Activated CD8-positive, alpha-beta T cell treated with anti-CD3 and anti-CD28 coated beads for 36 hours (primary cell): ENCODE measurements at regions of chr1 and their contacts with region 1.

Region 1: GRCh38 chr1:160098852-160099561 is 588 bp upstream of the IGSF8 start:
- DNase-seq: peak; percentile 99
- ATAC-seq: peak; percentile 89
- H3K4me3 Mint-ChIP-seq: peak overlapping the region; percentile 69
- H3K27ac Mint-ChIP-seq: peak overlapping the region; percentile 89
- H3K4me1 Mint-ChIP-seq: peaks cover 70% of the 10 kb centered on the region
- H3K27me3 Mint-ChIP-seq: no peaks in the 10 kb centered on the region
- CTCF ChIP-seq: no peak

Region 2: GRCh38 chr1:160046494-160047110 is 52.4 kb before region 1 on chr1:
- CTCF ChIA-PET with region 1: interaction called, 15 read pairs
- POLR2A ChIA-PET with region 1: interaction called, 3 read pairs
- intact Hi-C with region 1: no loop called
- DNase-seq: peak; percentile 54
- ATAC-seq: peak; percentile 87
- H3K4me3 Mint-ChIP-seq: peak overlapping the region; percentile 70
- H3K27ac Mint-ChIP-seq: peak overlapping the region; percentile 81
- H3K4me1 Mint-ChIP-seq: peaks cover 12% of the 10 kb centered on the region
- H3K27me3 Mint-ChIP-seq: peaks cover 12% of the 10 kb centered on the region
- CTCF ChIP-seq: peak; percentile 91

Region 3: DNA sequence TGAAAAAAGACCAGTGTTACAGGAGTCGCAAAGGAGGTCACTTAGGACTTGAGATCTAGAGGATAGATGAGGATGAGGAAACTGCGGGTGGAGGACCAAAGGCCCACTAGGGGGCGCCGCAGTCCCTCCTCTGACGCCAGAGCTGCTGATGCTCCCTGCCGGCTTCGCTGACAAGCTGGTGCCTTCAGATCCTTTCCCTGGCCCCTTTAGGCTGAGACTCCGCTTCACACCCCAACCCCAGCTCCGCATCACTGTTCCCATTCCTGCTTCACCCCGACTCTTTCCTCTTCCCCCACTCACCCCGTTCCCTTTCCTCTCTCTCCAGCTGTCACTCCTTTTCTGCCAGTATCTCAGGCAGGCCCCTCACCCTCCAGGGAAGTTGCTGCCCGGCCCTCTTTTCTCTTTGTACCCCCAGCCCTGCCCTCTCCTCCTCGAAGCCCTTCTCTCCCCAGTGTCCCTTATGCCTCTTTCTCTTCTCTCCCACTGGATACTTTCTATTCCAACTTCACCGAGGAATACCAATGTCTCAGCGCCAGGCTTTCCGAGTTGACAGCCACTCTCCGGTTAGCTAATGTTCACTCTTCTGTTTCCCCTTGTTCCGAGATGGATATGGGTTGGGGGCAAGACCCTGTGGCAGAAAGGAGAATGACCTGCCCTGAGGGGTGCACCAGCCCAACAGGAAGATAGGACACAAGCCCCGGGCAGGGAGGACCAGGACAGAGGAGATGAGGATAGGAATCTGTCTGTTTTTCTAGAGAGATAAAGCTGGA is 13.1 kb before region 1 on chr1:
- CTCF ChIA-PET with region 1: interaction called, 119 read pairs
- POLR2A ChIA-PET with region 1: interaction called, 8 read pairs
- intact Hi-C with region 1: no loop called
- DNase-seq: peak; percentile 92
- ATAC-seq: peak; percentile 76
- H3K4me3 Mint-ChIP-seq: no peak overlapping the region
- H3K27ac Mint-ChIP-seq: no peak overlapping the region
- H3K4me1 Mint-ChIP-seq: peaks cover 5% of the 10 kb centered on the region
- H3K27me3 Mint-ChIP-seq: peaks cover 21% of the 10 kb centered on the region
- CTCF ChIP-seq: peak; percentile 91

Region 4: GRCh38 chr1:160193091-160193819 is 94.2 kb after region 1 on chr1:
- CTCF ChIA-PET with region 1: interaction called, 10 read pairs
- POLR2A ChIA-PET with region 1: no interaction called
- intact Hi-C with region 1: no loop called
- DNase-seq: peak; percentile 86
- ATAC-seq: peak; percentile 93
- H3K4me3 Mint-ChIP-seq: no peak overlapping the region
- H3K27ac Mint-ChIP-seq: no peak overlapping the region
- H3K4me1 Mint-ChIP-seq: no peaks in the 10 kb centered on the region
- H3K27me3 Mint-ChIP-seq: peaks cover 2% of the 10 kb centered on the region
- CTCF ChIP-seq: peak; percentile 94

Region 5: DNA sequence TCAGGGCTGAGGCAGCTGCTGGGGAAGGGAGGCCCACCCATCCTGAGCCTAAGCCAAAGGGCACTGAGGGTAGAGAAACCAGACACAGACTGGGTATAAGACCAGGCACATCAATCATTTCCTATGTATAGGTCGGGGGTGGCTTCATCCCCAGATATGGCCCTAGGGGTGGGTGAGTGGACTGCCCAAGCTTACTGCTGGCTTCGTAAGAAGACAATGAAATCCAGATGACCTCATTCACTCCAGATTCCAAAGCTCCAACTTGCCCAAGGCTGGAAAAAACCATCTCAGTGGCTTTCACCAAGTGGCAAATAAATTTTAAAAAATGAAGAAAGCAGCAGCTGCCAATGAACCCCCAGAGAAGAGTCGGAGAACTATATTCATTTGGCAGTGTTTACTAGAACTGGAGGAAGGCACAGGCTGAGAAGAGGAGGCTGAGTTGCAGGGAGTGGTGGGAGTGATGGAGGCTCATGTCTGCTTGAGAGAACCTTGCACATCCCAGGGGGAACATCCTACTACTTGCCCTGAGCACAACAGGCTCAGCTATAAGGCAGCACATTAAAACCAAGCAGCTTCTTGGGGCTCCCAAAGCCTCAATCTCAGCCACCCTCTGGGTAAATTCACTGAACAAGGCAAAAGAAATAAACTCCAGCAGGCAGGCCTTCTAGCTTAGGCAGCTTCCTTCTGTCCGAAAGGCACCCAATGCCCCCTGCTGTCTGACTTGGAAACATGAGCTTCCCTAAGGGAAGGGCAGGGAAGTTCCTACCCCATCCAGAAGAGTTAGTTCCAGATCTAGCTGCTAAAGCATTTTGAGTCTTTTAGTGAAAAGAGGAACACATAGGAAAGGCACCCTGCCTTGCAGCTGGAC is 120.3 kb after region 1 on chr1:
- CTCF ChIA-PET with region 1: interaction called, 14 read pairs
- POLR2A ChIA-PET with region 1: no interaction called
- intact Hi-C with region 1: no loop called
- DNase-seq: no peak
- ATAC-seq: no peak
- H3K4me3 Mint-ChIP-seq: no peak overlapping the region
- H3K27ac Mint-ChIP-seq: no peak overlapping the region
- H3K4me1 Mint-ChIP-seq: no peaks in the 10 kb centered on the region
- H3K27me3 Mint-ChIP-seq: no peaks in the 10 kb centered on the region
- CTCF ChIP-seq: no peak

Region 6: DNA sequence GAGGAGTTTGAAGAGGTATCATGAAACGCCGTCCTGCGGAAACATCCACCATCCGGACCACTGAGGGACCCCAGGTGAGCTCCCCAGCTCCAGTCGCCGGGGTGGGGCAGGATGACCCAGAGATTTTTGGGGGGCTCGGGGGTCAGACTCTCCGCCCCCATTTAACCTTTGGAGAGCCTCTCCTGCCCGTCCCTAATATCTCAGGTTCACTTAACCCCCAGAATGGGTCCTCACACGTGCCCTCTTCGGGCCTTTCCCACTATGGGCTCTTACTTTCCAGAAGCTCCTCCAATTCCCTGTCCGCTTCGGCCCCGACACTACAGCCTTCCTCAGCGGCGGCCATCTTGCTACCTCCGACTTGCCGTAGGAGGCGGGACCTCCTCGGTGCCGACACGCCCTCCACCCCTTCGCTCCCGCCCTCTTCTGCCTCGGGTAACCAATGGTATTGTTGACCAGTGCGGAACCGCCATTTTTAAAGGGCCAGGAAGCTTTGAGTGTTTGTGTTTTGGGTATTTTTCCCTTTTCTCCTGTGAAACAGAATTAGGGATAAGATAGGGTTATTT is 185.9 kb after region 1 on chr1 and contains the start of gene PEX19:
- CTCF ChIA-PET with region 1: interaction called, 102 read pairs
- POLR2A ChIA-PET with region 1: interaction called, 5 read pairs
- intact Hi-C with region 1: loop called (anchors 5 kb)
- DNase-seq: peak; percentile 97
- ATAC-seq: peak; percentile 100
- H3K4me3 Mint-ChIP-seq: peak within 1 kb of the TSS; percentile 94
- H3K27ac Mint-ChIP-seq: peak within 1 kb of the TSS; percentile 94
- H3K4me1 Mint-ChIP-seq: peaks cover 20% of the 10 kb centered on the region
- H3K27me3 Mint-ChIP-seq: no peaks in the 10 kb centered on the region
- CTCF ChIP-seq: no peak
- total RNA-seq, gene PEX19: 52.9 to 56.9 TPM

Region 7: DNA sequence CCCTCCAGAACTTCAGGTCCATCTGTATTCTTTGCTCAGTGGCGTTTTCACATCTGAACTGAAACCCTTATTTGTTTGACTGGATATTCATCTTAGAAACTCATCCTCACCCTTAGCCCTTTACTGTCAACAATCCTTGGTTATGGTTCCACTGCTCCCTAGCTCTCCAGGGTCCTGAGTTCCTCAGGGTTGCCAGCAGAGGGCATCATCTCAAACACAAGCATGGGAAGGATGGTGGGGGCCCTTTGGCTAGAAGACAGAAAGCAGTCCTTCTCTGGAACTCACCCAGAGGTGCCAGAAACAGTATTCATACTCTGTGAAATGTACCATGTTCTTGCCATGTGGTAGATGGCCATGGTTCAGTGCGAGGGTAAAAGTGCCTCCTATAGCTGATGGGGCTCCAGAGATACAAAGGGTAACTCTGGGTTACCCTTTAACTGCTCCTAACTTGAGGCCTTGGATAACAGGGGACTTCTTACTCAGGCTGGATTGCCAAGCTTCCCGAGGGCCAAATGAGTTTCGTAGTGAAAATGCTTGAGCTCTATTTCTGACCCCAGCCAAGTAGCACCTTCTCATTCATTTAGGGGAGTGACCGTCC is 255.5 kb after region 1 on chr1:
- CTCF ChIA-PET with region 1: no interaction called
- POLR2A ChIA-PET with region 1: no interaction called
- intact Hi-C with region 1: no loop called
- DNase-seq: peak; percentile 24
- ATAC-seq: peak; percentile 70
- H3K4me3 Mint-ChIP-seq: no peak overlapping the region
- H3K27ac Mint-ChIP-seq: no peak overlapping the region
- H3K4me1 Mint-ChIP-seq: peaks cover 2% of the 10 kb centered on the region
- H3K27me3 Mint-ChIP-seq: no peaks in the 10 kb centered on the region
- CTCF ChIP-seq: peak; percentile 11

Region 8: DNA sequence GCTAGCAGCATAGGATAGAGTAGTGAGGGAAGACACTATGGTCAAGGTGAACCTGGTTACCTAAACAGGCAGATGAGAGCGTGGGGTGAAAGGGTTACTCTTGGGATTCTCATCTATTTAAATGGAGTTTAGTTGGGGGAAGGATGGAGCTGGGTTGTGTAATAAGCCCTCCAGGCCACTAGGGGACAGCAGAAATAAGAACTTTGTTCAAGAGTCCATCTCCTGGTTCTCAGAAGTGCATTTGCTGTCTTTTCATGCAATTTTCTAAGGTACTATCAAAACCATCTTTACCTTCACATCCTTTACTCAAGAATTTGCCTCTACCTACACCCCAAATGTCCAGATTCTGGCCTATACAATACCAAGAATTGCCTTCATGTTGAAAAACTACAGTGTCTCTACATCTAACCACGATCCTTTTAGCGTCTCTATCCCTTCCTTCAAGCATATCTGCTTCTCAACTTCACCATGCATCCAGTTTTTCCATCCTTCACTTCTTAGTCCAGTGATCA is 519.8 kb after region 1 on chr1:
- CTCF ChIA-PET with region 1: no interaction called
- POLR2A ChIA-PET with region 1: no interaction called
- intact Hi-C with region 1: loop called (anchors 10 kb)
- DNase-seq: peak; percentile 63
- ATAC-seq: peak; percentile 24
- H3K4me3 Mint-ChIP-seq: no peak overlapping the region
- H3K27ac Mint-ChIP-seq: peak overlapping the region; percentile 81
- H3K4me1 Mint-ChIP-seq: peaks cover 56% of the 10 kb centered on the region
- H3K27me3 Mint-ChIP-seq: no peaks in the 10 kb centered on the region
- CTCF ChIP-seq: peak; percentile 91